ENCODE measurements at regions of chr3 and their contacts with region 1.

Region 1: DNA sequence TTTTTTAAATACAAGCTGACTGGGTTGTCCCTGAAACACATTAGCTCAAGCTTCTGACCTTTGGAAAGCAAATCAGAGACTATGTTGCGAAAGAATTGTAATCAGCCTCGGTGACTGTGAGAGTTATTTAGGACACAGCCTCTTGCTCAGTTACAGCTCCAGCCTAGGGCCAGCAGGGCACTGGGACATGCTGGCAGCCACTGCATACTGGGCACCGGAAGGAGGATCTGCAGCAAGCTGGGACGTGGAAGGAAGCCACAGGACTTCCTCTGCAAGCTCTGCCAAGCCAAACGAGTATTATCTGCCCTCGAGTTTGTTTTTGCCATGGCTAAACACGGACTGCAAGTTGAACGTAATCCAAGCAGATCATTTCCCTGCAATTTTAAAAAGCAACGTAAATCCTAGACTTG is 24.4 kb upstream of the COPG1 start:
- DNase-seq: peak; percentile 90
- ATAC-seq: peak; percentile 94 to 96

Region 2: GRCh38 chr3:129045675-129046036 is 179.3 kb before region 1 on chr3:
- intact Hi-C with region 1: no loop called
- DNase-seq: peak; percentile 61
- ATAC-seq: peak; percentile 68 to 86

Region 3: GRCh38 chr3:129183569-129184395 is 41.2 kb before region 1 on chr3 and contains the start of gene CNBP:
- intact Hi-C with region 1: loop called in 1 of 2 experiments (anchors 5 kb)
- DNase-seq: peak; percentile 95
- ATAC-seq: peak; percentile 99
- total RNA-seq, gene CNBP: 342 to 378 TPM